CD4-positive, alpha-beta memory T cell (primary cell): ENCODE measurements at regions of chr9 and their contacts with region 1.

Region 1: DNA sequence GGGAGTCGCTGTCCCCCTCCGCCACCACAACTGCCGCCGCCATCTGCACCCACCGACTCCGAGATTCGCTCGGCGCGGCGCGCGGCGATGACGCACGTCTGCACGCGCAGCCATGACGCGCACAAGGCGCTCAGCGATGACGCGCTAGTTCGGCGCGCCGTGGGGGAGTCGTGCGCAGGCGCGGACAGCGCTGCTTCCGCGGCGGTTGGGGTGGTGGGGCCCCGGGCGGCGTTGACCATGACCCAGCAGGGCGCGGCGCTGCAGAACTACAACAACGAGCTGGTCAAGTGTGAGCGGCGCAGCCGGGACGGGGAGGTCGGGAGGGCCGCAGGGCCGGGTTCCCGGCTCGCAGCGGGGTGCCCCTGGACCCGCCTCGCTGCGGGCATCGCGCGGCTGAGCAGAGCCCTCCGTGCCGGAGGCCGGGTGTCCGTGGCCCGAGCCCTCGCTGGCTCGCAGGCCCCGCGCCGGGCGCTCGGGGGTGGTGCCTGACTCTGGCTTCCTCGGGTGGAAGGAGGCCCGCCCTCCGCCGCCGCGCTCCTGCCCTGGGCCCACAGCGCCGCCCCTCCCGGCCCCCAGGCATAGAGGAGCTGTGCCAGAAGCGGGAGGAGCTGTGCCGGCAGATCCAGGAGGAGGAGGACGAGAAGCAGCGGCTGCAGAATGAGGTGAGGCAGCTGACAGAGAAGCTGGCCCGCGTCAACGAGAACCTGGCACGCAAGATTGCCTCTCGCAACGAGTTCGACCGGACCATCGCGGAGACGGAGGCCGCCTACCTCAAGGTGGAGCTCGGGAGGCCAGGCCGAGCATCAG is at the starts of genes ANAPC2 and SSNA1:
- DNase-seq: peak; percentile 84 to 96 (median 92)
- H3K4me3 ChIP-seq: peak within 1 kb of the TSS; percentile 81 to 90
- H3K4me3 Mint-ChIP-seq: peak within 1 kb of the TSS; percentile 91 to 97 (median 94)
- H3K27ac ChIP-seq: peak within 1 kb of the TSS; percentile 96
- H3K27ac Mint-ChIP-seq: peak within 1 kb of the TSS; percentile 91 to 98 (median 96)
- H3K4me1 ChIP-seq: peaks cover 41% of the 10 kb centered on the region
- H3K4me1 Mint-ChIP-seq: peaks cover 22 to 62% (median 33%) of the 10 kb centered on the region in 4 donors
- H3K27me3 ChIP-seq: no peaks in the 10 kb centered on the region
- H3K27me3 Mint-ChIP-seq: no peaks in the 10 kb centered on the region
- total RNA-seq, gene ANAPC2: 116 to 125 TPM
- total RNA-seq, gene SSNA1: 48.6 to 49.5 TPM

Region 2: DNA sequence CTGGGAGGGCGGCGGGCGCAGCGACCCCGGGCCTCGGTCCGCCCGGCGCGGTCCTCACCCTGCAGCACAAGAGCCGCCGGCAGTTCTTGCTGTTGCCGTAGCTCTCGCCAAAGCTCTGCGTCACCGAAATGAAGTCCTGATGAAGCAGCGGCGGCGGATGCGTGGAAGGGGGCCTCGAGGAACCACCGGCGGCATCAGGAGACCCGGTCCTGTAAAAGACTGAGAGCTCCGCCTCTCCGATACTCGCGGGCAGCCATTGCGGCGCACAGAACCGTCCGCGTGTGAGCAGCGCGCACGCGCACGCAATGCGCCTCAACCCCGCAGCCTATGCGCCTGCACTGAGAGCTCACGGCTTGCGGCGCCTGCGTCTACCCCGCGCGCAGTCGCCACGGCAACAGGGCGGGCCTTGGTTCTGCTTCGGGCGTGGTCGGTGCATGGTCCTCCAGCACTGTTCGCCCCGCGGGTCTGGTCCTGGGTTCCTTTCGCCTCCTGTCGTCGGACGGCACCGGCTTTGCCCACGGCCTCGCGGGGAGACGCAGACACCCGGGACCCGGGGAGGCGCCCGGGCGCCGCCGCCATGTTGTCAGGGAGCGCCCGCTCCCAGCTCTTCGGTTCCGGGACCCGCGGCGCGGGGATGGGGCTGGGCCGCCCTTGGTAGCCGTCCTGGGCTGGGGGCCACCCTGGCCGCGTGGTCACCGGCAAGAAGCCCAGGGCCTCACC is 59.1 kb before region 1 on chr9:
- CTCF ChIA-PET with region 1: no interaction called
- POLR2A ChIA-PET with region 1: interaction called, 24 read pairs
- intact Hi-C with region 1: loop called (anchors 1 kb)
- DNase-seq: peak; percentile 89 to 92 (median 91)
- H3K4me3 ChIP-seq: peak overlapping the region in 1 of 2 donors; percentile 84
- H3K4me3 Mint-ChIP-seq: peak overlapping the region; percentile 86 to 97 (median 90)
- H3K27ac ChIP-seq: peak overlapping the region; percentile 80
- H3K27ac Mint-ChIP-seq: peak overlapping the region; percentile 82 to 99 (median 92)
- H3K4me1 ChIP-seq: peaks cover 31% of the 10 kb centered on the region
- H3K4me1 Mint-ChIP-seq: peaks cover 23 to 35% (median 30%) of the 10 kb centered on the region in 4 donors
- H3K27me3 ChIP-seq: no peaks in the 10 kb centered on the region
- H3K27me3 Mint-ChIP-seq: peaks cover 2 to 4% of the 10 kb centered on the region in 2 donors

Region 3: DNA sequence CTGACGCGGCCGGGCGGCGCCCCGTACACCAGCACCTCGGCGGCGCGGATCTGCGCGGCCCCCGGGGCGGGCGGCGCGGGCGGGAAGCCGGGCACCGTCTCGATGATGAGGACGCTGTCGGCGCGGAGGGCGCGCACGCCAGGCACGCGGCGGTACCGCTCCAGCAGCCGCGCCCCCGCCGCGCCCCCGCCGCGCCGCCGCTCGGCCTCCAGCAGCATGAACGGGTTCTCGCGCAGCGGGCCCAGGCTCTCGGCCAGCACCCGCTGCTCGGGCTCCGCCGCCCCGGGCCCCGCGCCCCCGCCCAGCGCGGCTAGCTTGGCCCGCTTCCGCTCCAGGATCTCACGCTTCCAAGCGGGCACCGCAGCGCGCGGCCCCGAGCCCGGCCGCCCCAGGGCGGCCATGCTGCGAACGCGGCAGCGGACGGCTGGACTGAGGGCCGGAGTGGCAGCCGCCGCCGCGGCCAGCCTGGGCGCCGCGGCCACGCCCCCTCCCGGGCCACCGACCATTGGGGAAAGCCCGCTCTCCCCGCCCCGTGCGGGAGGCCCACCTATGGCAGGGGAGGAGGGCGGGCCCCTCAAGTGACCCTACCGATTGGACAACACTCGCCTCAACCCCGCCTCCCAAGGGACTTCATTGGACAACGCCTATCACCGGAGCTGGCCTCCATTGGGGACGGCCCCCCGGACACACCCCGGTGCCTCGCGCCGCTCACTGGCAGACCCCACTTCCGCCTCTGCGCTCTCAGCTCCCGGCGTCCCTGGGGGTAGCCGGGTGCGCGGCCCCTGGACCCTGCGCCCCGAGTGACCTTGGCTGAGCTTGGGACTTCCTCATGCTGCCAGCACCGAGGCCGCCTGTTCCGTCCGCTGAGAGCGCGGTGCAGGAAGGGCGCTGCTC is 11.9 kb after region 1 on chr9 and contains the start of gene TPRN:
- CTCF ChIA-PET with region 1: interaction called, 7 read pairs
- POLR2A ChIA-PET with region 1: interaction called, 169 read pairs
- intact Hi-C with region 1: loop called (anchors 1 kb)
- DNase-seq: peak; percentile 97 to 99 (median 98)
- H3K4me3 ChIP-seq: peak within 1 kb of the TSS; percentile 52 to 77
- H3K4me3 Mint-ChIP-seq: peak within 1 kb of the TSS; percentile 81 to 93 (median 82)
- H3K27ac ChIP-seq: peak within 1 kb of the TSS; percentile 72
- H3K27ac Mint-ChIP-seq: peak within 1 kb of the TSS; percentile 62 to 93 (median 83)
- H3K4me1 ChIP-seq: peaks cover 40% of the 10 kb centered on the region
- H3K4me1 Mint-ChIP-seq: peaks cover 9 to 35% (median 25%) of the 10 kb centered on the region in 4 donors
- H3K27me3 ChIP-seq: no peaks in the 10 kb centered on the region
- H3K27me3 Mint-ChIP-seq: no peaks in the 10 kb centered on the region
- total RNA-seq, gene TPRN: 8.5 to 8.6 TPM

Region 4: DNA sequence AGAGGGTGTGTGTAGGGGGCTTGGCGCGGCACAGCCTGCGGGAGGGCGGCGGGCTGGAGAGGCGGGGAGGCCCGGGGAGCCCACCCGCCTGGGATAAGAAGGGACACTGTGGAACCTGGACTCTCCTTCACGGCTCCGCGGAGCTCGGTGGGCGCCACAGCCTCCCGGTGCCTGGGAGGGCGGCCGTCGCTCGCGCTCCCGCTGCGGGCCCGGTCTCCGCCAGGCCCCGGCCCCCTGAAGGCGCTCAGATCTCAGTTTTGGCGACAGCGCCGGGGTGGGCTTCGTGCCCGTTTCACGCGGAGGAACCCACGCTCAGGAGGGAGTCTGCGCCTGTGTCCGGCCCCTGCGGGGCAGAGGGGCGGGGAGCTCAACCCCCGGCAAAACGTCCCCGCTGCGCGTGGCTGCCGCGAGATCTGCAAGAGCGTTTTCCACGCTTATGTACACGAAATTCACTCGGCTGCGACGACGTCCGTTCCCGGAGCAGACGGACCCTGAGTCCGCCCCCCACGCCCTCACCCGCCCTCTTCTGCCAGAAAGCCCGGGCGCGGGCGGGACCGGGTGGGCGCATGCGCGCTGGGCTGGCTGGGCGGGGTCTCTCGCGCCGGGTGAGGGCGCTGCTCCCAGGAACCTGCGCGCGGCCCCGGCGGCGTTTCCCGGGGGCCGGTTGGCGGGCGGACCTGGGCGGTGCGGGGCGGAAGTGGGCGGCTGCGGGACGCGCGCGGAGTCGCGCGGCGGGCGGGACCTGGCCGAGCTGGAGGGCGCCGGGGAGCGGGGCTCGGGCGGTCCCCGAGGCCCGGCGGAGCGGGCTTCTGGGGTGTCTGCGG is 66.1 kb after region 1 on chr9 and contains the start of gene NELFB:
- CTCF ChIA-PET with region 1: interaction called, 3 read pairs
- POLR2A ChIA-PET with region 1: interaction called, 21 read pairs
- intact Hi-C with region 1: no loop called
- DNase-seq: peak; percentile 89 to 98 (median 94)
- H3K4me3 ChIP-seq: peak within 1 kb of the TSS; percentile 66 to 81
- H3K4me3 Mint-ChIP-seq: peak within 1 kb of the TSS; percentile 88 to 94 (median 92)
- H3K27ac ChIP-seq: peak within 1 kb of the TSS; percentile 69
- H3K27ac Mint-ChIP-seq: peak within 1 kb of the TSS; percentile 43 to 92 (median 77)
- H3K4me1 ChIP-seq: peaks cover 25% of the 10 kb centered on the region
- H3K4me1 Mint-ChIP-seq: peaks cover 2 to 24% (median 10%) of the 10 kb centered on the region in 4 donors
- H3K27me3 ChIP-seq: no peaks in the 10 kb centered on the region
- H3K27me3 Mint-ChIP-seq: no peaks in the 10 kb centered on the region
- total RNA-seq, gene NELFB: 44.3 to 44.9 TPM